ENCODE measurements at regions of chr1 and their contacts with region 1.

Region 1: DNA sequence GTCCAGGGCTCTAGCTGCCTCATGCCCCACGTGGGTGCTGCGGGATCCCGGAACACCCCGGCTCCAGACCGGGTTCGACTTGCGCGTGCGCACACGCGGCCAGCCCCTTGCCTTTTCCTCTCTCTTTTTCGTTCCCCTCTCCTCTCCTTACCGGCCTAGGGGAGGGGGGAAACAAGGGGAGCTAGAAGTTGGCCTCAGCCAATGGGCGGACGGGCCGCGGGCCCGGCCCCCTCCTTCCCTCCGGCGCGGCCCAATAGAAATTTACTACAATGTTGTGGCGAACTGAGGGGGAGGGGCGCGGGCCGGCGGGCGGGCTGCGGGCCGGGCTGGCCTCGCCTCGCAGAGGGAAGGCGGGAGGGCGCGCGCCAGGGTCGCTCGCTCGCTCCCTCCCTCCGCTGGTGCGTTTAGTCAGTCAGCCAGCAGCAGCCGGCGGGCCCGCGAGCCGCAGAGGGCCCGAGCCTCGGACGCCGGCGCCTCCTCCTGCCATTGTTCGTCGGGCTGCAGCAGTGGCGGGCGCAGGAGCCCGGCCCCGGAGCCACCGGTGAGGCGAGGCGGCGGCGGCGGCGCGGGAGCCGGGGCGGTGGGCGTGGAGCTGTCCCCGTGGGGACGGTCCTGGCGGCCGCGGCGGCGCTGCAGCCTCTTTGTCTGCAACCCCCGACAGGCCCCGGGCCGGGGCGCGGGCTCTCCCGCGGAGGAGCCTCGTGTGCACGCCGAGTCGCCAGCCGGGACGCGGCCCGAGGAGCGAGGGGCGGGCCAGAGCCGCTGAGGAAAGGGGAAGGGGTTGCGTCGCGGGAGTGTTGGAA is at the start of gene EPB41:
- DNase-seq: peak; percentile 93
- ATAC-seq: peak; percentile 90
- H3K4me3 Mint-ChIP-seq: peak within 1 kb of the TSS; percentile 92
- H3K27ac Mint-ChIP-seq: peak within 1 kb of the TSS; percentile 95
- H3K4me1 Mint-ChIP-seq: peaks cover 48% of the 10 kb centered on the region
- H3K27me3 Mint-ChIP-seq: no peaks in the 10 kb centered on the region
- CTCF ChIP-seq: no peak
- total RNA-seq, gene EPB41: 74.9 to 80.3 TPM

Region 2: DNA sequence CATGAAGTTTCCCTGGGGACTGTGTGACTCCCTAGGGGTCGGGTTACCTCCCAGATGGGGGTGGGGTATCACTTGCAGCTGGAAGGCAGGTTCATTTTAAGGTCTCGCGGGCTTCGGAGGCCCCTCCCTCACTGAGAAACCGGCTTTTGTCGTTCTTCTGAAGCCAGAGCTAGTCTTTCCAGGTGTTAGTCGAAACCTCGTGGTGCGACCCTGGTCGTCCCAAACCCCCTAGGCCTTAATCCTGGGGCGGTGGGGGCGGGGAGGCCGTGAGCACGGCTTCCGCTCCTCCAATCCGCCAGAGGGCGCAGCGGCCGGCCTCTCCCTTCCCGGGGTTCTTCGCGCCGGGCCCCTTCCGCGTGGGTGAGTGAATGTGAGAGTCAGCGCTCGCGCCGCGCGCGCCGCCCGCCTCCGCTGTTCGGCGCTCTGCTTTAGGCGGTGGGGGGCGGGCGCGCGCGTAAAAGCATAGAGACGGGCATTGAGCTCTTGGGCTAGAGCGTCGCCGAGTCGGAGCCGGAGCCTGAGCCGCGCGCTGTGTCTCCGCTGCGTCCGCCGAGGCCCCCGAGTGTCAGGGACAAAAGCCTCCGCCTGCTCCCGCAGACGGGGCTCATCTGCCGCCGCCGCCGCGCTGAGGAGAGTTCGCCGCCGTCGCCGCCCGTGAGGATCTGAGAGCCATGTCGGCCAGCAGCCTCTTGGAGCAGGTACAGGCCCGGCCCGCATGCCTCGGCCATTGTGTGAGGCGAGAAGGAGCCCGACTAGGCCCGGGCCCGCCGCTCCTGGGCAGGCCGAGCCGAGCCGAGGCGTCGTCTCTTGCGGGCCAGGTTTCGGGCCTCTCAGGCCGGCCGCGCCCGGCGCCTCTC is 177.8 kb before region 1 on chr1 and contains the start of gene YTHDF2:
- CTCF ChIA-PET with region 1: no interaction called
- POLR2A ChIA-PET with region 1: no interaction called
- intact Hi-C with region 1: no loop called
- DNase-seq: peak; percentile 99
- ATAC-seq: peak; percentile 91
- H3K4me3 Mint-ChIP-seq: peak within 1 kb of the TSS; percentile 98
- H3K27ac Mint-ChIP-seq: peak within 1 kb of the TSS; percentile 92
- H3K4me1 Mint-ChIP-seq: peaks cover 35% of the 10 kb centered on the region
- H3K27me3 Mint-ChIP-seq: no peaks in the 10 kb centered on the region
- CTCF ChIP-seq: peak; percentile 97
- total RNA-seq, gene YTHDF2: 72.2 to 82.1 TPM

Region 3: DNA sequence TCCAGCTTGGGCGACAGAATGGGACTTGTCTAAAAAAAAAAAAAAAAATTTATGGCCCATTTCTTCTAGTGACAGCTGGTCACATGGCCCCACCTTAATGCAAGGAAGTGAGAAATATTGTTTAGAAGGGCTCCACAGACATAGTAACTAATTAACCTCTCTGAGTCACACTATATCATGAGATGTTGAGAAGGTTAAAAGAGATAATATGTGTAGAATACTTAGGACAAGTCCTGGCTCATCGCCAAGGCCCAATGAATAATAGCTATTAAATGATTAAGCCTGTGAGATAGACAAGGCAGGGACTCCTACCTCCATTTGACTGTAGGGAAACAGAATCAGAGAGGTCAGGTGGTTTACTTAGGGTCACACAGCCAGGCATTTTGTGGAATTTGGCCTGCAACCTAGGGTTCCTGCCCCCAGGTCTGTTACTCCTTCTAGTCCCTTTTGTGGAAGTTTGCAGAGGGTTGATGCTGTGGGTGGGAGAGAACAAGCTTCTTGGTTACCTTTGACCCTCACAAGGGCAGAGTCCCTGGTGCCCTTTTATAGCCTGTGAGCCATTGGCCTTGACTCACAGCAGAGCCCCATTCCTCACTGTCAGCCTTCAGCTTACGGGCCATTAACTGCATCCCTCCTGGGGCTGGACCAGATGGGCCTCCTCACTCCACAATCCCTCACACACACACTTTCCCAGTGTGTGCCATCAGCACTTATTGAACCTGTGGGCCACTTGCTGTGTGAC is 53.9 kb before region 1 on chr1:
- CTCF ChIA-PET with region 1: no interaction called
- POLR2A ChIA-PET with region 1: no interaction called
- intact Hi-C with region 1: no loop called
- DNase-seq: no peak
- ATAC-seq: no peak
- H3K4me3 Mint-ChIP-seq: no peak overlapping the region
- H3K27ac Mint-ChIP-seq: no peak overlapping the region
- H3K4me1 Mint-ChIP-seq: no peaks in the 10 kb centered on the region
- H3K27me3 Mint-ChIP-seq: no peaks in the 10 kb centered on the region
- CTCF ChIP-seq: no peak

Region 4: DNA sequence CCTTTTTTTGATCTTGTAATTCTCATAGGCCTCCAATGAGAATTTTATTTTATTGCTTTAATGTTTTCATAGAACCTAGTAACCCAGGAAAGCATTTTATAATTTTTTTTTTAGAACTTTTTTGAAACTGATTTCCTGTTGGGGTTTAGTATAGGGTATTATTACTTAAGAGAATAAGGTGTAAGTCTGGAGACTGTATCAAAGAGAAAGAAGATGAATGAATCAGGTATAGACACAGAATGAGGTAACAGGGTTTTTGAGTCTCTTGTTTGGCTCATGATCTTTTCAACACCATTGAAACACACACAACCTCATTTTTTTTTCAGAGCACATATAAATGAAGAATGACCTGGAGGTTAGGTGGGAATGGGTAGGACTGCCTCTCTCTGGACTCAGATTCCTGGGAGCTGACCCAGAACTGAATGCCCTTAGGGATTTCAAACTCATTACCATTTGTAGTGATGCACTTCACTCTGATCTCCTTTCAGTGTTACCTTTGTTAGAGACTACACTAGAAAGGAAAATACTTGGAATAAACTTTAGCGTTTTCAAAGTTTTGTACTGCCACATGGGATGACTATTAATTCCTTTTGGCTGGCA is 50.9 kb after region 1 on chr1:
- CTCF ChIA-PET with region 1: interaction called, 3 read pairs
- POLR2A ChIA-PET with region 1: interaction called, 10 read pairs
- intact Hi-C with region 1: no loop called
- DNase-seq: no peak
- ATAC-seq: no peak
- H3K4me3 Mint-ChIP-seq: no peak overlapping the region
- H3K27ac Mint-ChIP-seq: peak overlapping the region; percentile 55
- H3K4me1 Mint-ChIP-seq: peaks cover 59% of the 10 kb centered on the region
- H3K27me3 Mint-ChIP-seq: no peaks in the 10 kb centered on the region
- CTCF ChIP-seq: no peak

Measured in activated CD8-positive, alpha-beta T cell treated with anti-CD3 and anti-CD28 coated beads for 36 hours (primary cell).